Transverse colon (tissue), 4 donors: ENCODE measurements at regions of chr22 and their contacts with region 1.

Region 1: DNA sequence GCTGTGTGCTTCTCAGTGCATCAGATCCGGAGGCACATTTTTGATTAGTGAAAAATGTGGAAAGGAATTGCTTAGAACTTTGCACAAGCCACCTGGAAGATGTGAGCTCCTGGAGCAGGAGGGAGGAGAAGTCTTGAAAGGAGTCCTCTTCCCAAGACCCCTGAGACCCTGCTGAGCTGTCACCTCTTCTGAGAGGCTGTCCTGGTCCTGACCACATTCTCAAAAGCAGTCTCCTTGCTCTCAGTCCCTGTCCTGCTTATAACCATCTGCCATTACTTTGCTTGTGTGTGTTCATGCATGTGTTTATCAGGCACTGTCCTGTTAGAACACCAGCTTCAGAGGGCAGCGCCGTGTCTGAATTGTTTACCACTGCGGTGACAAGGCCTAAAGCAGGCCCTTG is 86.5 kb downstream of the BCR start:
- DNase-seq: no peak
- H3K4me3 ChIP-seq: no peak overlapping the region
- H3K27ac ChIP-seq: no peak overlapping the region
- H3K4me1 ChIP-seq: no peaks in the 10 kb centered on the region
- H3K27me3 ChIP-seq: no peaks in the 10 kb centered on the region
- CTCF ChIP-seq: no peak
- EP300 ChIP-seq: no peak
- POLR2A ChIP-seq: no peak

Region 2: DNA sequence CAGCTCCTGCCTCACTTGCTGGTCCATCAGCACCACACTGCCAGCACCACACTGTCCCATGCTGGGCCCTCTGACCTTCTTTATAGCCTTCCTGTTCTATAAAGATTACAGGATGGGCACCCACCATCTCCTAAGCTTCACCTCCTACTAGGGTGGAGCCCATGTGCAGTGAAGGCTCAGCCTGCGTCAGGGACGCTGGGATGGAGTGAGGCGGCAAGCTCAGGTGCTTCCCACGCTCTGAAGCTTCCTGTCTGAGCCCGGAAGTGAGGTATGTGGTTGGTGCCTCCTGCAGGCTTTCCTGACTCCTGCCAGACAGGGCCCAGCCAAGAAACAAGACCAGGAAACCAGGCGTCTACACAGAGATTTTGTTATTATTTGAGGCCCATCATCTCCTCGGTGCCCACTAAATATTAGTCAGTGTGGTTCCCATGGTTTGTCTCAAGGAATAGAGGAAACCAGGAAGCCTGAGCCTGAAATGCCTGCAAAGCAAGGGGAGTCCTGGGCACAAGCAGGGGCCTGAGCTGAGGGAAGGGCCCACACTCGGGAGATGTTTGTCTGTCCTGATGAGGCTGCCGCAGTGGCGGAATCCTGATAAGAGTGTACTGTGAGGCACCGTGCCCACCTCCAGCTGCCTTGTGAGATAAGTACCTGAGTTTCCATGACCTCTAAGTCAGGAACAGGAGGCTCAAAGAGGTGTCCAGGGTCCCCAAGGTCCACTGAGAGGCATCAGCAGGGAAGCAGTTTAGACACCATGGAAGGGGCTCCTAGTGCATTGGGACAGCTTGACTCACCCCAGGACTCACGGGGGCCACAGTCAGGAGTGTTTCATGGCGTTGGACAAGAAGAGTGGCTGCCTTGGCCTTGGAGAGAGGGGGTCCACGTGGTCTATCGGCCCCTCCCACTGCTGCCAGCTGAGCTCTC is 147.0 kb before region 1 on chr22:
- in situ Hi-C with region 1: no loop called
- intact Hi-C with region 1: no loop called
- DNase-seq: no peak
- H3K4me3 ChIP-seq: no peak overlapping the region
- H3K27ac ChIP-seq: no peak overlapping the region
- H3K4me1 ChIP-seq: no peaks in the 10 kb centered on the region
- H3K27me3 ChIP-seq: no peaks in the 10 kb centered on the region
- CTCF ChIP-seq: no peak
- EP300 ChIP-seq: no peak
- POLR2A ChIP-seq: no peak

Region 3: DNA sequence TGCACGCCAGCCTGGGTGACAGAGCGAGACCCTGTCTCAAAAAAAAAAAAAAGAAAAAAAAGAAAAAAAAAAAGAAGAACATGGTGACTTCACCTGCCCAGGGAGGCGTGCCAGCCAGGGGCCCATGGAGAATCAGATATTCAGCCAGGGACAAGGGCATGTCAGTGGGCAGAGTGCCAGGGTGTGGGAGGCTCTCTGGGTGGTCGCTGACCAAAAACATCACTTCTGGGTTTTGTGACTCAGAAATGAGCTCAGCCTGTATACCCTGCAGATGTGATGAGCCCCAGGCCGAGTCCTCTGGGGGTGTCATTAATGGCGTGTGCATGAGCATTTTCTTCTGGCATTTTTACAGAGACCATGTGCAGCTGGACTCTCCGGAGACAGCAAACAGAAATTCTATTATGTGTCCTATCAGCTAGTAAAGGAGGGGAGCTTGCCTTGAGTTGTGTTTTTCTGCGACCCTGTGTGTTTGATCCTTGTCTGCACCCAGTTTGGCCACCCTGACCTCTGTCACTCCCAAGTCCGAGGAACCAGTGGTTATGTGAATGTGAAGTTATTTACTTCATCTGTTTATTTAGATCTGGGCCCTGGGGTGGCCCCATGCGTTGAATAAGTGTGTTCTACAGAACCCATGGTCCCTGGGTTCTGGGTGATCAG is 32.9 kb before region 1 on chr22:
- in situ Hi-C with region 1: no loop called
- intact Hi-C with region 1: loop called (anchors 1 kb)
- DNase-seq: no peak
- H3K4me3 ChIP-seq: no peak overlapping the region
- H3K27ac ChIP-seq: no peak overlapping the region
- H3K4me1 ChIP-seq: peaks cover 2 to 29% (median 12%) of the 10 kb centered on the region in 4 donors
- H3K27me3 ChIP-seq: no peaks in the 10 kb centered on the region
- CTCF ChIP-seq: no peak
- EP300 ChIP-seq: no peak
- POLR2A ChIP-seq: no peak